ENCODE measurements at regions of chr2 and their contacts with region 1.

Region 1: DNA sequence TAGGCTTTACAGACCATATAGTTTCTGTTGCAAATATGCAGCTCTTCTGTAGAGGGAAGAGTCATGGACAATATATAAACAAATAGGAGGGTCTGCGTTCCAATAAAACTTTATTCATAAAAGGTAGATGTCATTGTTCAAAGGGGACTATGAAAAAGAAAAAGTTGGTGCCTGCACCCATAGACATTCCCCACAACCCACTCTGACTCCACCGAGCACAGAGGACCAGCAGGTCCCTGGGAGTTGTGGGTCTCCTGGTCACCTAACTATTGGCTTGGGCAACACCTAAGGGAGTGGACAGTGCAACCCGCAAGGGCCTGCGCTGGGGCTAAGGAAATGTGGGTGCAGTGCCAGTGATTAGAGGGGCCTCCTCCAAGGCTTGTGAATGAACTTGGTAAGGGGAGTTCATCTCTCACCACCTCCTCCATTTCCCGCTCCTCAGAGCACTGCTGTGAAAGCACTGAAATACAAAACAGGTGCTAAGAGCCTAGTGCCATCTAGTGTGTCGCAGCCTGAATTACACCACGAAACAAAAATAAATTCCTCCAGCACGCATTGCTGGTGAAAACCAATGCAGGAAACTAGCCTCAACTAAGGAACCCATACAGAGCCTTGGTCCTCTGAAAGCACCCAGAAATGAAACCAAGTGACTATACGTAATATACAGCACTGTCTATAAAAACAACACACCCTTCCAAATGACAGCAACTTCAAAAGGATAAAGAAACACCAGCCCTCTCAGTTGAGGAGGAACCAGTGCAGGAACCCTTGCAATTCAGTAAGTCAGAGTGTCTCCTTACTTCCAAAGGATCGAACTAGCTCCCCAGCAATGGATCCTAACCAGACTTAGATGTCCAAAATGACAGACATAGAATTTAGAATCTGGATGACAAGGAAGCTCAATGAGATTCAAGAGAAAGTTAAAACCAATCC is 166.6 kb downstream of the RNF144A start:
- DNase-seq: peak; percentile 77
- ATAC-seq: peak; percentile 74
- H3K4me3 ChIP-seq: no peak overlapping the region
- H3K27ac ChIP-seq: no peak overlapping the region
- H3K4me1 ChIP-seq: no peaks in the 10 kb centered on the region; the same call in 1 of the 2 replicates
- H3K27me3 ChIP-seq: 0 out of 2 replicates have a peak, but pooled peaks cover 6% of the 10 kb centered on the region
- CTCF ChIP-seq: peak; percentile 85

Region 2: GRCh38 chr2:7037340-7038333 is 46.2 kb before region 1 on chr2:
- CTCF ChIA-PET with region 1: no interaction called
- POLR2A ChIA-PET with region 1: no interaction called
- intact Hi-C with region 1: loop called (anchors 2 kb)
- DNase-seq: peak; percentile 64
- ATAC-seq: peak; percentile 76
- H3K4me3 ChIP-seq: no peak overlapping the region
- H3K27ac ChIP-seq: no peak overlapping the region
- H3K4me1 ChIP-seq: peaks cover 4% of the 10 kb centered on the region
- H3K27me3 ChIP-seq: no peaks in the 10 kb centered on the region
- CTCF ChIP-seq: peak; percentile 88